ENCODE measurements at regions of chr18 and their contacts with region 1.

Region 1: DNA sequence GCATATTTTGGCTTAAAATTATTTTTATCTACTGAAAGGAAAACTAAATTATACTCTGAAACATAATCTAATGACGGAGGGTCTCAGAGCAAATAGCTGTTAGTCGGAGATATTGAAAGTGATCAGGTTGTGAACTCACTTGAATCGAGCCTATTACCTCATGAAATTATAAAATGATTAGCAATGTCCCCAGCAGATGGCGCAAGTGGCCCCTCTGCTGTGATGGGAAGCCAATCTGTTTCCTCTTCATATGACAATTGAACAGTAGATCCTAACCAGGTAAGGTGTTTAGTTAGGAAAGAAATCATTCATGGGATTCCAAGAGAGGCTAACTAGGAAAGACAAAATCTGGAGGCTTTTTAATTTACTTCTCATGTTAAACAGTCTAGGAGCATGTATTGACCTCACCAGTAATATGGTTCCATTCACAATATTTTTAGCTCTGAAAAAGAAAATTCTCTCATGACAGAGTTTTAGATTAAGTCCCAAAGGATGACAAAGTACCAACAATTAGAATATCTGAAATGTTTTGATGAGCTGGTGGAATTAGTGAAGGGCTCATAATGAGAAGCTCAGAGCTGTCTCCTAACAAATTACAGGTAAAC is 29.9 kb upstream of the MPPE1 start:
- DNase-seq: peak; percentile 89
- ATAC-seq: peak; percentile 62
- H3K4me3 Mint-ChIP-seq: no peak overlapping the region
- H3K27ac Mint-ChIP-seq: no peak overlapping the region
- H3K4me1 Mint-ChIP-seq: no peaks in the 10 kb centered on the region
- H3K27me3 Mint-ChIP-seq: no peaks in the 10 kb centered on the region
- CTCF ChIP-seq: peak; percentile 71

Region 2: GRCh38 chr18:11676867-11677266 is 261.1 kb before region 1 on chr18:
- CTCF ChIA-PET with region 1: no interaction called
- POLR2A ChIA-PET with region 1: no interaction called
- intact Hi-C with region 1: no loop called
- DNase-seq: no peak
- ATAC-seq: no peak
- H3K4me3 Mint-ChIP-seq: no peak overlapping the region
- H3K27ac Mint-ChIP-seq: no peak overlapping the region
- H3K4me1 Mint-ChIP-seq: no peaks in the 10 kb centered on the region
- H3K27me3 Mint-ChIP-seq: peaks cover 12% of the 10 kb centered on the region
- CTCF ChIP-seq: no peak

Region 3: GRCh38 chr18:11752116-11752911 is 185.7 kb before region 1 on chr18:
- CTCF ChIA-PET with region 1: no interaction called
- POLR2A ChIA-PET with region 1: no interaction called
- intact Hi-C with region 1: no loop called
- DNase-seq: peak; percentile 33
- ATAC-seq: peak; percentile 62
- H3K4me3 Mint-ChIP-seq: peak overlapping the region; percentile 46
- H3K27ac Mint-ChIP-seq: no peak overlapping the region
- H3K4me1 Mint-ChIP-seq: peaks cover 6% of the 10 kb centered on the region
- H3K27me3 Mint-ChIP-seq: peaks cover 41% of the 10 kb centered on the region
- CTCF ChIP-seq: no peak

Region 4: GRCh38 chr18:11775436-11776174 is 162.4 kb before region 1 on chr18:
- CTCF ChIA-PET with region 1: no interaction called
- POLR2A ChIA-PET with region 1: no interaction called
- intact Hi-C with region 1: no loop called
- DNase-seq: no peak
- ATAC-seq: no peak
- H3K4me3 Mint-ChIP-seq: no peak overlapping the region
- H3K27ac Mint-ChIP-seq: no peak overlapping the region
- H3K4me1 Mint-ChIP-seq: no peaks in the 10 kb centered on the region
- H3K27me3 Mint-ChIP-seq: peaks cover 1% of the 10 kb centered on the region
- CTCF ChIP-seq: no peak

Region 5: DNA sequence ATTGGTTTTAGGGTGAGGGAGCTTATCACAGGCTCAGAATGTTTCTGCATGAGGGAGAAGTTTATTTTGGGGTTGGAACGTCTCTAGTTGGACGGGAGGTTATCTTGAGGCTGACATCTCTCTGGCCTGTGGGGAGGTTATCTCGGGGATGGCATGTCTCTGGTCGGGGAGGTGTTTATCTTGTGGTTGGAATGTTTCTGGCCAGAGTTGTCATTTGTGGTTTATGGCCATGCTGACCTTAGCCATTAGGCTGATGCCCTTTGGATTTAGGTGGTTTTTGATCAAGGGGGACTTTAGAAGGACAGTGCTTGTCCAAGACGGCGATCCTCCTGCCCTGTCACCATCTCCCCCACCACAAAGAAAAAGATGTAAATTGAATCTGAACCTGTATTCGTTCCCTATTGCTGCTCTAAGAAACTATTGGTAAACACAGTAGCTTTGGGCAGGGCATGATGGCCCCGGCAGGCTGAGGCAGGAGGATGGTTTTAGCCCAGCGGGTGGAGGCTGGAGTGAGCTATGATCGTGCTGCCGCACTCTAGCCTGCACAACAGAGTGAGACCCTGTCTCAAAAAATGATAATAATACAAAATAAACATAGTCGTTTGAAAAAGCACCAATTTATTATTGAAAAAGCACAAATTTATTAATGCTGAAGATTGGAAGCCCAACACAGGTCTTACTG is 12.0 kb before region 1 on chr18:
- CTCF ChIA-PET with region 1: interaction called, 20 read pairs
- POLR2A ChIA-PET with region 1: no interaction called
- intact Hi-C with region 1: no loop called
- DNase-seq: no peak
- ATAC-seq: no peak
- H3K4me3 Mint-ChIP-seq: no peak overlapping the region
- H3K27ac Mint-ChIP-seq: no peak overlapping the region
- H3K4me1 Mint-ChIP-seq: peaks cover 3% of the 10 kb centered on the region
- H3K27me3 Mint-ChIP-seq: peaks cover 2% of the 10 kb centered on the region
- CTCF ChIP-seq: no peak

Region 6: DNA sequence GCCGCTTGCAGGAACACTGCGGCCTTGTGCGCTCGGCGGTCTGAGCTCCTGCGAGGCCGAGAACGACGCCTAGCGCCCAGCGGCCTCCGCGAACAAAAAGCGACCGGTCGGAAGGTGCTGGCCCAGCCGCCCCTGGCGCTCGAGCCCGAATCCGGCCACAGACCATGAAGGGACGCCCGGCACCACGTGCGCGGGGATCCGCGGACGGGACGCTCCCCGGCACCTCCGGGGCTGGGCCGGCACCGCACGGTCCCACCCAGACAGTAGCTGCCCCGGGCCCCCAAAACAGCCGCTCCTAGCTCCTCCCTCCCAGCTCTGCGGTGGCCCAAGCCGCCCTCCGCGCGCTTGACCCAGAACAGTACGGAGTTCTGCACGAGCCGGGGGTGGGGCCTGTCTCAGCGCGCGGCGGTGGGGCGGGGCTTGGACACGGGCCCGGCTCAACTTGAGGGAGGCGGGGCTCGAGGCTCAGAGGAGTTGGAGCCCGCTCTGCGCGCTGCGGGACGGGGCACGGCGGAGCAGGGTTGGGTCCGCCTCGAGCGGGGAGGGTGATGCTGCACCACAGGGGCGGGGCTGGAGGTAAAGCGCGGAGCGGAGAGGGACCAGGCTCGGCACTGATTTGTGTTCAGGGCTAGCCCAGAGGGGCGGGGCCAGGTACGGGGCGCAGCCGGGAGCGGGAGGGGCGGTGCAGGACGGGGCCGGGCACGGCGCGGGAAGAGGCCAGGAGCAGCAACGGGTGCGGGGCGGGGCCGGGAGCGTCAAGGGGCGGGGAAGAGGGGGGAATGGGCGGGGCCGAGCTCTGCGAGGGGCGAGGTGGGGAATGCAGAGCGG is 42.8 kb after region 1 on chr18:
- CTCF ChIA-PET with region 1: interaction called, 30 read pairs
- POLR2A ChIA-PET with region 1: interaction called, 4 read pairs
- intact Hi-C with region 1: no loop called
- DNase-seq: peak; percentile 97
- ATAC-seq: peak; percentile 94
- H3K4me3 Mint-ChIP-seq: peak overlapping the region; percentile 91
- H3K27ac Mint-ChIP-seq: peak overlapping the region; percentile 82
- H3K4me1 Mint-ChIP-seq: peaks cover 17% of the 10 kb centered on the region
- H3K27me3 Mint-ChIP-seq: peaks cover 5% of the 10 kb centered on the region
- CTCF ChIP-seq: no peak

Region 7: DNA sequence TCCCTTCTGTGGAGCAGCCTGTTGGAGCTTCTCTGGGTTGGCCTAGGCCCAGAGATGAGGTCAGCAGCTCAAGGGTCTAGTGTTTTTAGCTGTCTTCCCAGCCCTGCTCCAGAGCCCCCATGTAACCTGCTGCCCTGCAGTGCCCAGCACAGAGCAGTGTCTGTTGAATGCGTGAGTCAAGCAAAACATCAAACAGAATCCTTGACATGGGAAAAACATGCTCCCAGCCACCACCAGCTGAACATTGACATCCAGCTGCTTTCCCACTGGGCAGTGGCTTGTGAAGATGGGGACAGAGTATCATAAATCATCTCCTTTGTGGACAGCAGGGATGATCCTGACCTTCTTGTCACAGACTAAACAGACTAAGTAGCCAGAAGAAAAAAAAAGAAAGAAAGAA is 65.9 kb after region 1 on chr18:
- CTCF ChIA-PET with region 1: interaction called, 247 read pairs
- POLR2A ChIA-PET with region 1: no interaction called
- intact Hi-C with region 1: no loop called
- DNase-seq: no peak
- ATAC-seq: no peak
- H3K4me3 Mint-ChIP-seq: no peak overlapping the region
- H3K27ac Mint-ChIP-seq: no peak overlapping the region
- H3K4me1 Mint-ChIP-seq: no peaks in the 10 kb centered on the region
- H3K27me3 Mint-ChIP-seq: no peaks in the 10 kb centered on the region
- CTCF ChIP-seq: no peak

Region 8: DNA sequence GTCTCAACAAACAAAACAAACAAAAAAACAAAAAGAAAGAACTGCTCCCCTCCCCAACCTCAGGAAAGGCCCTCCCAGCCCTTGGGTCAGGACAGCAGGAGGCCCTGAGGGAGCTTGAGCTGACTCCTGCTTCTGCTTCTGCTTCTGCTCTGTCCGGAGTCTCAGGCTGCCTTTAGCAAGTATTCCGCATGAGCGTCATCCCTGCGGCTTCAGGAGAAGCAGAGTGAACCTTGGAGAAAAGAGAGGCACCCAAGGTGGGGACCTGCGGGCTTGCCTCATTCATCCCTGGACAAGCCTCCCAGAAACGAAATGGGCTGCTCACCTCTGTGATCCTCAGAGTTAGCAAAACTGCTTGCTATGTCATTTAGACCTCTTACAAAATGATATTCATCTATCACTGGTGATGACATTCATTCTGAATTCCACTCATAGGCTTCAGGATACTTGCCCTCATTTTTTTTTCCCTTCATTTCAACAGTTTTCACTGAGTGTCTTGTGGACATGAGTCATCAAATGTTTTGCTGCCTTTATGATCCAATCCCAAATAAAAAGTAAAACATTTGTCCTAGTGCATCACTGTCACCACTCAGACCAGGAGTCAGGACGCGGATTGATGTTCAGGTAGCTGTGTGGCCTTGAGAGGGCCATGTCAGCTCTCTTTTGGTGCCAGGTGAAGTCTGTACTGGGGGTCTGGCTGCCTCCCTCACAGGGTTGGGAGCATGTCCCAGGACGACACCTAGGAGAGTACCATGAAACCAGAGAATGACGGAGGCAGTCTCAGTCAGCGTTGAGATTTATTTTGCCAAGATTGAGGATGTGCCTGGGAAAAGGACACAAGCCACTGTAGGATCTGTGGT is 95.0 kb after region 1 on chr18:
- CTCF ChIA-PET with region 1: interaction called, 90 read pairs
- POLR2A ChIA-PET with region 1: no interaction called
- intact Hi-C with region 1: loop called (anchors 2 kb)
- DNase-seq: no peak
- ATAC-seq: no peak
- H3K4me3 Mint-ChIP-seq: no peak overlapping the region
- H3K27ac Mint-ChIP-seq: no peak overlapping the region
- H3K4me1 Mint-ChIP-seq: peaks cover under 1% of the 10 kb centered on the region
- H3K27me3 Mint-ChIP-seq: peaks cover 2% of the 10 kb centered on the region
- CTCF ChIP-seq: no peak

Region 9: DNA sequence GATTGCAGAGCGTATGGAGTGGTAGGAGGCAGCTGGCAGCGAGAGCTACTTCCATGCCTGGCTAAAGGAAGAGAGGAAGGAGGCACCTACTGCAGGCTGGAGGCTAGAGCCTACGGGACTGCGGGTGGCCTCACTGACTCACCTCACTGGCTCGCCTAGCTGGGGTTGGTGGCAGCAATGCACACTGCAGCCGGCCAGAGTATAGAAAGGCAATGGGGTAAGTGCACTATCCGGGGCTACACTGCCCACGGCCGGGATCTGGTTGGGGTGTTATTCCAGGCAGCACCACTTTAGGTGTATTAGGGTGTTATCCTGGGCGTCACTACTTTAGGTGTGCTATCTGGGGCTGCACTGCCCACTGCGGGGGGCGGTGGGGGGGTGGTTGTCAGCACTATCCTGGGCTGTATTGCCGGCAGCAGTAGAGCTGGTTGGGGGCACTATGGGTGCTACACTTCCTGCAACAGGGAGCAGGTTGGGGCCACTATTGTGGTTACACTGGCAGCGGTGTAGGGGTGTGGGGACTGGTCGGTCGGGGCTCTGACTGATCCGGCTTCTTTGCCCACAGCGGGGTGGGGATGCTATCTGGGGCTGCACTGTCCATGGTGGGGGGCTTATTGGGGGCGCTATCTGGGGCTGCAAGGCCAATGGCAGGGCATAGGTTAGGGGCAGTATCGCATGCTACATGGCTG is 122.3 kb after region 1 on chr18:
- CTCF ChIA-PET with region 1: no interaction called
- POLR2A ChIA-PET with region 1: no interaction called
- intact Hi-C with region 1: no loop called
- DNase-seq: no peak
- ATAC-seq: no peak
- H3K4me3 Mint-ChIP-seq: no peak overlapping the region
- H3K27ac Mint-ChIP-seq: no peak overlapping the region
- H3K4me1 Mint-ChIP-seq: no peaks in the 10 kb centered on the region
- H3K27me3 Mint-ChIP-seq: no peaks in the 10 kb centered on the region
- CTCF ChIP-seq: no peak

Measured in activated CD8-positive, alpha-beta T cell treated with anti-CD3 and anti-CD28 coated beads for 36 hours (primary cell).